PC-9 (cell line): ENCODE measurements at regions of chr2 and their contacts with region 1.

Region 1: GRCh38 chr2:142603759-142604158 is 273.7 kb upstream of the KYNU start:
- DNase-seq: no peak
- H3K4me3 ChIP-seq: no peak overlapping the region
- H3K27ac ChIP-seq: no peak overlapping the region
- H3K4me1 ChIP-seq: peaks cover 10% of the 10 kb centered on the region
- H3K27me3 ChIP-seq: no peaks in the 10 kb centered on the region
- CTCF ChIP-seq: peak; percentile 65

Region 2: DNA sequence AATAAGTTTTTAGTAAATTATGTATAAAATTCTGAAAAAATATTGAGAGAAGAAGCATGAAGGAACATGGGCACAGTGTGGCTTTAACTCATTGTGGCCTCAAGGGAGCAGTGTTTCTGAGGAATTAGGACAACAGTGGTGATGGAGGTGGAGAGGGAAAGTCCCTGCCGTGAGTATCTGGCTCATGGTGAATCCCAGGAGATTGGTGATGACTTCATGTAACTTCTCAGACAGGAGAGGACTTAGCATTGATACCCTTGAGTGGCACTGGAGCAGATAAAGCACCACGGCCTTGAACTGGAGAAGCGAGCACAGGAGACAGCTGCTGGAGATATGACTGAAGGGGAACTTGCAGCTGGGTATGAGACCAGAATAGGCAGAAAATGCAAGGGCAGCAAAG is 438.0 kb before region 1 on chr2:
- CTCF ChIA-PET with region 1: no interaction called
- POLR2A ChIA-PET with region 1: no interaction called
- intact Hi-C with region 1: loop called (anchors 5 kb)
- DNase-seq: peak in 1 of 2 experiments; percentile 5
- H3K4me3 ChIP-seq: no peak overlapping the region
- H3K27ac ChIP-seq: no peak overlapping the region
- H3K4me1 ChIP-seq: no peaks in the 10 kb centered on the region
- H3K27me3 ChIP-seq: no peaks in the 10 kb centered on the region
- CTCF ChIP-seq: peak; percentile 53; the same call in 1 of the 2 replicates

Region 3: DNA sequence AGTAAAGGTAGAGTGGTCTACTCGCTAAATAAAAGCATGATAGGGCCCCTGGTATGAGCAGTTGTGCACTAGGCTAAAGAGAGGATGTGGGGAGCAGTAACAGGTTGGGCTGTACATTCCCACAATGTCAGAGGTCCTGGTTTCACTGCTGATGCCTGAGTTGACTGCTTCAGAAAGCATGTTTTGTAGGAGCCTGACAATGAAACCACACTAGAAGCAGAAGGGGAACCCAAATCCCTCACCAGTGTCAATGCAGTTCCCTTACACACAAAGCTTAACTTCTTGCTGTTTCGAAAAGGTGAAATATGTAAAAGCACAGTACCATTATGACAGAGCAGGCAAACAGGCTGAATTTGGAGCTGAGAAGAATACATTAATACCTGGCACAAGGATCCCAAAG is 18.0 kb before region 1 on chr2:
- CTCF ChIA-PET with region 1: interaction called, 11 read pairs
- POLR2A ChIA-PET with region 1: no interaction called
- intact Hi-C with region 1: no loop called
- DNase-seq: no peak
- H3K4me3 ChIP-seq: no peak overlapping the region
- H3K27ac ChIP-seq: no peak overlapping the region
- H3K4me1 ChIP-seq: no peaks in the 10 kb centered on the region
- H3K27me3 ChIP-seq: no peaks in the 10 kb centered on the region
- CTCF ChIP-seq: no peak